ENCODE measurements at regions of chr12 and their contacts with region 1.

Region 1: DNA sequence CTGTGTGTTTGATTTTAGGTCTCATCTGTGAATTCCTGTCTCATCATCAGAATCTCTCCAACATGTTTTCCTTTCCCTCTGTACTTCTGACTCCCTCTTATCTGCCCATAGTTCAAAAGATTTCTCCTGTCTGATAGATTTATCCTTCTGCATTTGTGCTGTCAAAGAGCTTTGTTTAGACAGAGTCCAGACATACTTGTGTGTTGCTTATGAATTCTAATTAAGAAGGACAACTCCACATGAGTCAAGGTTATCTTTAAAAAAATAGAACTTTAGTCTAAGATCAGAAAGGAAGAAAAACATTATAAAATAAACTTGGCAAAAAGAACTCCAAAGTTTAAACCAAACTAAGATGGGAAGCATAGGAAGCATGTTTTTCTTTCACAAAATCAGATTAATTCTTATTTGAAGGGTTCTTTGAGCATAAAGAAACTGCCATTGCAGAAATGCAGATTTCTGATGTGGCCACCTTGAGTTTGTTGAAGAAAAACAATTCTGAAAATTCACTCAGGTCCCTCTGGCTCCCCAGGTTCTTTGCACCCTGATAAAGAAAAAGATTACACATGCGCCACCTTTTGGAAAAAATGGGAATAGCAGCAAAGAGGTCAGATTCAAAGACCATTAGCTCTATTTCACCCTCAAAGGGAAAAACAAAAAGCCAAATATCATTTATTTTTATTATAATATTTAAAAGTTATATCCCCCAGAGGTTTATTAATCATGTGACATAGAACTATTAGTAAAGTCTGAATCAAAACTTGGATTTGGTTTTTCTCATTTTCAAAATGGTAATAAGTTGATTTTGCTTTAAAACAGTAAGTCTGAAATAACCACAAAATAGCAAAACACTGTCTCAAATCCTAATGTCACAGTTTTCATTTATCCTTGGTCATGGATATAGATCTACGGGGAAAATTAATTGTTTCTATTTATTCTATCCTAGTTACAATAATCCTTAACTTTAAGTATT is 143.7 kb upstream of the DCN start:
- DNase-seq: no peak
- H3K4me3 Mint-ChIP-seq: no peak overlapping the region
- H3K27ac Mint-ChIP-seq: no peak overlapping the region
- H3K4me1 Mint-ChIP-seq: no peaks in the 10 kb centered on the region
- H3K27me3 Mint-ChIP-seq: peaks cover 3% of the 10 kb centered on the region

Region 2: DNA sequence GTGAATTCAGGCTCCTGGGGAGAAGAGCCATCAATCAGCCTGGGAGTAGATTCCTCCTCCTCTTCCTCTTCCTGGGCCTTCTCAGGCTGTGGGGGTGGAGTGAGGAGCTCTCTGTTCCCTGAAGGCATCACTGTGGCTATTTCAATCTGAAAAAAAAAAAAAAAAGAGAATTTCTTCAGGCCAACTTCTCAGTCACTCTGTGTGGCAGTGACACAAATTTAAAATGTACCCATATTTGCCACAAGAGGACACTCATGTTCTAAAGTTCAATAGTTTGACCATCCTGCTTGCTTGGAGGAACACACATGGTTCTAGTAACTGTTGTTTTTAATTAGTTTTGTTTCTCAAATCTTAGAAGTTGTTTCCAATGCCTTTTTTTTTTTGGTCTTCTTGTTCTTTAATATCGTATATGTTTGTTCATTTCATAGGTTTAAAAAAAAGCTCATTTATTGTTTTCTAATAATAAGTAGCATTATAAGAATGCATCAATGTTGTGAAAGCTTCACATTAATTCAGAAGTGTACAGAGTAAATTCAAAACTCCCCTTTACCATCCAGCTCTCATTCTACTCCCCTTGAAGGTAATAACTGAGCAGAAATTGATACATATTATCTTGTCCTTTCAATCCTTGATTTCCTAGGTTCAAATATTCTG is 348.1 kb before region 1 on chr12:
- intact Hi-C with region 1: loop called (anchors 2 kb)
- DNase-seq: no peak
- H3K4me3 Mint-ChIP-seq: no peak overlapping the region
- H3K27ac Mint-ChIP-seq: no peak overlapping the region
- H3K4me1 Mint-ChIP-seq: no peaks in the 10 kb centered on the region
- H3K27me3 Mint-ChIP-seq: peaks cover 5% of the 10 kb centered on the region

Region 3: DNA sequence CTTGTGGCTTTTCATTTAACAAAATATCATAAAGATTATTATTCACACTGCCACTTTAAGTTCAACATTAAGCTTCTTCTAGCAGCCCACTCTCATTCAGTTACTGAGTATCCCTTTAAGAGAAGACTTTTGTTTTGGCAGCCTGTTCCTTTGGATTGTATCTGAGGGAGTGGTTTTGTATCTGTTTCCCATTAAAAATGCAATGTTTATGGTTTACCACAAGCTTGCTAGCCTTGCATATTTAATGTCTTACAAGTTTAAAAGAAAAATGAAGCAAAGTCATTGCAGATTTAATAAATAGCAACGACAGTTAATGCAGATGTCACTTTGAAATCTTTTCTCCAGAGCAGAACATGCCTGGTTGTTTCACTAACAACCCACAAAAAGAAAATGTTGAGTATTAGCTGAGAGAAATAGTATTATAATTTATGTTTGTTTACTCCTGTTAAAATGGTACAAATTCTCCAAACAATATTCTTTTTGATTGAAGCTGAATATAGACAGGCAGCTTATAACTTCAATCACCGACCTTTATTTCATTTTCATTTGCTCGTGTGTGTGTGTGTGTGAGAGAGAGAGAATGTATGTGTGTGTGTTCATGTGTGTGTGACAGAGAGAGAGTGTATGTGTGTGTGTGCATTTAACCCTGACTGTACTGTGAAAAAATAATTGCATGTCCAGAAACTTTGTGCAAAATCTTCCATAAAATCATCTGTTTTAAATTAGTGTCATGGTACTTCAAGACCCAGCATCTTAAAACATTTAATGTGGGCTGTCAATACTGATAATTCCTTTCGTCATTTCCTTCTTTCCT is 145.6 kb before region 1 on chr12:
- intact Hi-C with region 1: loop called (anchors 10 kb)
- DNase-seq: no peak
- H3K4me3 Mint-ChIP-seq: no peak overlapping the region
- H3K27ac Mint-ChIP-seq: no peak overlapping the region
- H3K4me1 Mint-ChIP-seq: no peaks in the 10 kb centered on the region
- H3K27me3 Mint-ChIP-seq: no peaks in the 10 kb centered on the region

Region 4: DNA sequence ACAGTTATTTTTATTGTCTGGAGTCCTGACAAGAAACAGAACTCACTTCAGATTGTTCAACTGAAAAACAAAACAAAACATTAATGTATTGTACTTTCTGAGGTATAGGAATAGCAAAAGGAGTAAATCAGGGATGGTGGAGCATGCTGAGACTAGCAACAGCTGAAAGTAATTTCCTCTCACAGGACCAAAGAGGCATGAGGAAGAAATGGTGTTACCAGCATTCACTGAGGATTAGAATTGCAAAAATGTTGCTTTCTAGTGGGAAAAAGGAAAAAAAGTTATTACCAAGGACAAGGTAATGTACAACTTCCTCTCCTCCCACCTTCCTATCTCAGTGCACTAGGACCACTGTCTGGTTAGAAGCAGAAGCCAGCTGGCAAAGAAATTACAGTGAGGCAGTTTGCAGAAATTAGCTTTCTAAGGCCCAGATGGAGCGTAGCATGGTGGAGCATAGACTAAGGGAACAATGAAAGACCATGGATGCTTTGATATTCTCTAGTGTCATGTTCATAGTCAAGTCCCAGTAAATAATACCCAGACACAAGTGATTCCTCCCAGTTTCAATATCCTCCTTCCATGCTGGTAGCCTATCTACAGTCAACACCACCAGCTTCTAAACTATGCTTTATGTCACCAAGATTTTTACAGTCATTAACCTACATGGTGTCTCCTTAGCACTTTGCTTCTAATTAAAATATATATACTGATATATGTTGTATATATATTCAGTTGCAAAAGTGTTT is 10.0 kb before region 1 on chr12:
- intact Hi-C with region 1: no loop called
- DNase-seq: no peak
- H3K4me3 Mint-ChIP-seq: no peak overlapping the region
- H3K27ac Mint-ChIP-seq: no peak overlapping the region
- H3K4me1 Mint-ChIP-seq: no peaks in the 10 kb centered on the region
- H3K27me3 Mint-ChIP-seq: no peaks in the 10 kb centered on the region

Measured in activated T-helper 2 cell treated with anti-CD3 and anti-CD28 coated beads, Interferon-gamma antibody, Interleukin-2, Interleukin-4, amounts not matched to agents 10 μg/mL and 5 μg/mL and 100 μg/mL, durations not matched to agents 14 hours and 24 hours and 36 hours (primary cell).